ENCODE measurements at regions of chr4 and their contacts with region 1.

Region 1: GRCh38 chr4:152500800-152501434 is 35.0 kb downstream of the FBXW7 start:
- DNase-seq: no peak
- ATAC-seq: peak in 3 of 4 donors; percentile 51 to 91 (median 78)
- H3K4me3 ChIP-seq: no peak overlapping the region
- H3K27ac ChIP-seq: no peak overlapping the region
- H3K4me1 ChIP-seq: no peaks in the 10 kb centered on the region
- H3K27me3 ChIP-seq: no peaks in the 10 kb centered on the region
- CTCF ChIP-seq: peak; percentile 85

Region 2: DNA sequence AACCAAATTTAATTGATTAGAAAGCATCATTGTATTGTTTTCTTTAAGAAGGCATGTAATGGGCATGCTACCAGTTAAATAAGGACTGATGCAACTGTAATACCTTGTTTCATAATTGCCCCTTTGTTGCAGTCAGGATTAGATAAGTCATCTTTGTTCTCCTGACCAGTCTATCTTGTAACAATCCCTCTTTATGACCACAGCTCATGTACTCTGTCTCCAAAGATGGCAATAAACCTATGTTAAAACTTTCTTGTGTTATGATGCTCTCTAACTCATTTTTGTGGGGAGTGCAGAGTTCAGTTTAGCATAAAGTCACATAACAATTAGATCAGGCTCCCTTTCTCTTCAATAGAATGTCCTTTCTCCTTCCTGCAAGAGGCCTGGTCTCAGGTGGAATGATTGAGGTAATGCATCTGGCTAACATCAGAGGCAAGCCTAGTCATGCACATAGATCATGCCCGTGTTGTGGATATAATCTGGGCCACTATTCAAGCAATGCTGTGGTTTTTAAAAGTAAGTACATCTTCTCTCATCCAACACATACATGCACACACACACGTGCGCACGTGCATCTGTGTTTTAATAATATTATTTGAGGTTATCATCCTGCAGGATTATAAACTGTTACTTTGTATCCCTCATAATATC is 133.3 kb after region 1 on chr4:
- intact Hi-C with region 1: loop called in 1 of 2 experiments (anchors 5 kb)
- DNase-seq: no peak
- ATAC-seq: no peak
- H3K4me3 ChIP-seq: no peak overlapping the region
- H3K27ac ChIP-seq: no peak overlapping the region
- H3K4me1 ChIP-seq: no peaks in the 10 kb centered on the region
- H3K27me3 ChIP-seq: no peaks in the 10 kb centered on the region
- CTCF ChIP-seq: no peak

Region 3: DNA sequence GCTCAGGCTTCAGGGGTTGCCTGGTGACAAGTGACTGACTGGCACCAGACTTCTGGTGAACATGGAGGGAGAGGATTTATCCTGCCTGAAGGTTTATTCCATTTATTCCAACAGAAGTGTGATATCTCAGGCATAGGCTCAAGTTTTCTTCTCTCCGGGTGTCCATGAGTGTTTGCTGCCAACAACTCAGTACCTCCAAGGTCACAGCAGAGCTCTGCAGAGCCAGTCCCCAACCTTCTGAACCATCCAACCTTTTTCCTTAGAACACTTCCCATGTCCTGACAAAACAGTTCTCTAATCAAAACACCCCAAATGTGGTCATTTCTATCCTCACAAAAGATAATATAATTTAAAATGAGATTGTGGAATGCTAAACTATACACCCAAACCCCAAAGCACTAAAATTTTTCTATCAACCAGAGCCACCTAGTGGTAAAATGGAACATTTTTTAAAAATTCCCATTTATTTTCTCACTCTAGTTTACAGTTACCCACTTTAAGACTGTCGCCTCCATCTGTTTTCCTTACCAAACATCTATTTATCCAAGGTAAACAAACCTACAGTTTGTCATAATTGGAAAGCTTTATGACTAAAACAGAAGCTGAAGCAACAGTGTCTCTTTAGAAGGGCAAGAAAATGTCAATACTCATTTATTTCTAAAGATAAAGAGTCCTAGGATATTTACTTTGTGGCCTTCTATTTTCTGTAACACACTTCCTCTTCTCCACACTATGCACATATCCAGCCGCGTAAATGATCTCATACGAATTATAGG is 139.3 kb after region 1 on chr4:
- intact Hi-C with region 1: loop called (anchors 1 to 5 kb)
- DNase-seq: no peak
- ATAC-seq: no peak
- H3K4me3 ChIP-seq: no peak overlapping the region
- H3K27ac ChIP-seq: no peak overlapping the region
- H3K4me1 ChIP-seq: no peaks in the 10 kb centered on the region
- H3K27me3 ChIP-seq: no peaks in the 10 kb centered on the region
- CTCF ChIP-seq: peak; percentile 62